PC-3 (cell line): ENCODE measurements at regions of chr3 and their contacts with region 1.

Region 1: DNA sequence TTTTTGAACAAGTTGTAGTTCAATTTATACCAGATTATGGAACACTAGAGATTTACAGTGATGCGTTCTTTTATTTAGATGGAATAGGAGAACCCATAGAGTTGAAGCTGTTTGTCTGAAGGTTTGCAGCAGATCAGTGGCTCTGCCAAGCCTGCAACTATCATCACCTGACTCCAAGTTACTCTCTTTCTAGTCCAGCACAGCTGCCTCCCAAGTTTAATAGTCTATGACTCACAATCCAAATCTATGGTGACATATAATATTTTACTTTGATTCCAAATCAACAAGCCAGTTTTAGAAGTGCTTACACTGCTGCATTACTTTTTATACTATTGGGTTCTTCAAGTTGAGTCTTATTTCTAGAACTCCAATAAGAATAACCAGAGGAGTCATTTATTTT is 400.4 kb downstream of the LPP start:
- DNase-seq: peak; percentile 85
- ATAC-seq: peak; percentile 92
- H3K4me3 ChIP-seq: no peak overlapping the region; the same call in 1 of the 2 replicates
- H3K27ac ChIP-seq: peak overlapping the region; percentile 51
- H3K4me1 ChIP-seq: peaks cover 30% of the 10 kb centered on the region
- H3K27me3 ChIP-seq: no peaks in the 10 kb centered on the region
- CTCF ChIP-seq: no peak

Region 2: DNA sequence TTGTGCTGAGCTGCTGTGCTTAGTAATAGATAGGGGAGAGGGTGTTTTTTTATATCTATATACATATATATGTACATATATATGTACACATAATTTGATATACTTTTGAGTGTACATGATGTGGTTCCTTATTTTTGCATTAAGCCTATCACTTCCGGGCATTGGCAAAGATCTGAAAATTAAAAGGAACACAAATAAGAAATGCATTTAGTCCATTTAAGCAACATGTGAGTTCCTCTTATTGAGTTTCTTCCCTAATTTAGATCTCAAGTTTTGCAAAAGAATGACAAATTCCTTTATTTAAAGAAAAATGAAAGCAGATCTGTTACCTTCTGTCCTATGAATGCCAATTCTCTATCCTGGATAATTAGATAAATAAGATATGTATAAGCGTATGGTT is 34.7 kb after region 1 on chr3:
- CTCF ChIA-PET with region 1: no interaction called
- POLR2A ChIA-PET with region 1: no interaction called
- intact Hi-C with region 1: no loop called
- DNase-seq: no peak
- ATAC-seq: no peak
- H3K4me3 ChIP-seq: no peak overlapping the region
- H3K27ac ChIP-seq: no peak overlapping the region
- H3K4me1 ChIP-seq: peaks cover 22% of the 10 kb centered on the region
- H3K27me3 ChIP-seq: no peaks in the 10 kb centered on the region
- CTCF ChIP-seq: no peak

Region 3: DNA sequence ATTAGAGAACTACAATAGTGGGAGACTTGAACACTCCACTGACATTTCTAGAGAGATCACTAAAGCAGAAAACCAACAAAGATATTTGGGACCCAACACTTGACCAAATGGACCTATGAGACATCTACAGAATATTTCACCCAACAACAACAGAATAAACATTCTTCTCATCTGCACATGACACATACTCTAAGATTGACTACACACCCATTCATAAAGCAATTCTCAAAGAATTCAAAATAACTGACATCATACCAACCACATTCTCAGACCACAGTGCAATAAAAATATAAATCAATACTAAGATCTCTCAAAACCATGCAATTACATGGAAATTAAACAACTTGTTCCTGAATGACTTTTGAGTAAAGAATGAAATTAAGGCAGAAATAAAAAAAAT is 73.2 kb after region 1 on chr3:
- CTCF ChIA-PET with region 1: no interaction called
- POLR2A ChIA-PET with region 1: no interaction called
- intact Hi-C with region 1: loop called (anchors 5 kb)
- DNase-seq: peak; percentile 91
- ATAC-seq: peak; percentile 91
- H3K4me3 ChIP-seq: 0 out of 2 replicates have a peak overlapping the region, but pooled peaks have one; percentile 5
- H3K27ac ChIP-seq: peak overlapping the region; percentile 88
- H3K4me1 ChIP-seq: peaks cover 41% of the 10 kb centered on the region
- H3K27me3 ChIP-seq: no peaks in the 10 kb centered on the region
- CTCF ChIP-seq: no peak